Dorsolateral prefrontal cortex (tissue), 120 donors: ENCODE measurements at regions of chr7 and their contacts with region 1.

Region 1: GRCh38 chr7:157138424-157139110 is at the start of gene UBE3C:
- DNase-seq: peak; percentile 70 to 93 (median 86)
- H3K4me3 ChIP-seq: peak within 1 kb of the TSS; percentile 58 to 95 (median 84)
- H3K27ac ChIP-seq: peak within 1 kb of the TSS; percentile 54 to 96 (median 90)
- H3K27me3 ChIP-seq: no peaks in the 10 kb centered on the region
- CTCF ChIP-seq: peak in 21 of 56 donors; percentile 5 to 44 (median 20)
- total RNA-seq, gene UBE3C: 46.9 to 76.5 (median 59.8) TPM

Region 2: GRCh38 chr7:155804897-155805825 is 1333.4 kb before region 1 on chr7:
- intact Hi-C with region 1: loop called in 1 of 2 experiments (anchors 10 kb)
- DNase-seq: peak in 7 of 10 donors; percentile 35 to 70 (median 53)
- H3K4me3 ChIP-seq: peak overlapping the region; percentile 20 to 69 (median 49)
- H3K27ac ChIP-seq: peak overlapping the region in 14 of 59 donors; percentile 3 to 67 (median 38)
- H3K27me3 ChIP-seq: peaks cover 0 to 99% (median 71%) of the 10 kb centered on the region in 45 donors
- CTCF ChIP-seq: peak in 53 of 56 donors; percentile 9 to 82 (median 41)

Region 3: DNA sequence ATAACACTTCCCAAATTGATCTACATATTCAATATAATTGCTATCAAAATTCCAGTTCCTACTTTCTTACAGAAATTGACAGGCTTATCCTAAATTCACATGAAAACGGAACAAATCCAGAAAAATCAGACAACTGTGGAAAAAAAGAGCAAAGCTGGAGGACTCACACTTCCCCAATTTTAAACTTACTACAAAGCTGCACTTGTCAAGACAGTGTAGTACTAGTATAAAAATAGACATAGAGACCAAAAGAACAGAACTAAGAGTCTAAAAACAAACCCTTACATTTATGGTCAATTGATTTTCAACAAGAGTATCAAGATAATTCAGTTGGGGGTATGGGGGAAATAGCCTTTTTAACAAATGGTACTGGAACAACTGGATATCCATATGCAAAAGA is 273.1 kb before region 1 on chr7:
- intact Hi-C with region 1: no loop called
- DNase-seq: no peak
- H3K4me3 ChIP-seq: no peak overlapping the region
- H3K27ac ChIP-seq: no peak overlapping the region
- H3K27me3 ChIP-seq: no peaks in the 10 kb centered on the region
- CTCF ChIP-seq: no peak

Region 4: DNA sequence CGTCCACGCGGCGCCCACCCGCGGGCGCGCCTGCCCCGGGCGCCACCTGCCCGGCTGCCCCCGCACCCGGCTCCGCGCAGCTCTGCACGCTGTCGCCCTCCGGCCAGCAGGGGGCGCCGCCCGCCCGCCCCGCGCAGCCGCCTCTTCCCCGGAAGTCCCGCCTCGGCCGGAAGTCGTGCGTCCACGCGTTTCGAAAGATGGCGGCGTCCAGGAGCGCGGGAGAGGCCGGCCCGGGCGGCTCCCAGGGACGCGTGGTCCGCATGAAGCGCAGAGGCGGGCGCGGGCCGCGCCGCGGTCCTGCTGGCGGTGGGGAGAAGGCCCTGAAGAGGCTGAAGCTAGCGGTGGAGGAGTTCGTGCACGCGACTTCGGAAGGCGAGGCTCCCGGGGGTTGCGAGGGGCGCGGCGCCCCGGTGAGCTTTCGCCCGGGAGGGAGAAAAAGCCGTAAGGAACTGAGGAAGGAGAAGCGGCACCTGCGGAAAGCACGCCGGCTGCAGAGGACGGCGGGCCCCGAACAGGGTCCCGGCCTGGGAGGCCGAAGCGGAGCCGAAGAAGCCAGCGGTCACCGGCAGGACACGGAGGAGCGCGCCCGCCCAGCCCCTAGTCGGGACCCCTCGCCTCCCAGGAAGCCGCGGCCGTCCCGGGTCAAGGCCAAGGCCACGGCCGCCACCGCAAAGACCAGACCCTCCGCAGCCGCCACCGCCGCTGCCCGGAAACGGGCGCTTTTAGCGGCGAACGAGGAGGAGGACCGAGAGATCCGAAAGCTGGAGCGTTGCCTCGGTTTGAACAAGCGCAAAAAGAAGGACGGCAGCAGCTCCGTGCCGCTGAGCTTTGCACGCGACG is 188.8 kb before region 1 on chr7 and contains the start of gene NOM1:
- intact Hi-C with region 1: loop called in 1 of 2 experiments (anchors 5 kb)
- DNase-seq: peak; percentile 67 to 91 (median 82)
- H3K4me3 ChIP-seq: peak within 1 kb of the TSS; percentile 64 to 100 (median 96)
- H3K27ac ChIP-seq: peak within 1 kb of the TSS in 32 of 59 donors; percentile 7 to 78 (median 50)
- H3K27me3 ChIP-seq: peaks cover 0 to 2% (median 0%) of the 10 kb centered on the region in 45 donors
- CTCF ChIP-seq: peak; percentile 24 to 98 (median 74)
- total RNA-seq, gene NOM1: 14.2 to 36.0 (median 24.9) TPM